Esophagus squamous epithelium (tissue), 5 donors: ENCODE measurements at regions of chr5 and their contacts with region 1.

Region 1: GRCh38 chr5:55232985-55233928 is at the start of gene CCNO:
- DNase-seq: no peak
- H3K4me3 ChIP-seq: peak within 1 kb of the TSS; percentile 49 to 77 (median 64)
- H3K27ac ChIP-seq: peak within 1 kb of the TSS; percentile 40 to 69 (median 54)
- H3K4me1 ChIP-seq: peaks cover 26 to 44% (median 35%) of the 10 kb centered on the region in 3 donors
- H3K27me3 ChIP-seq: peaks cover 7 to 99% (median 17%) of the 10 kb centered on the region in 4 donors
- CTCF ChIP-seq: peak in 1 of 6 experiments; percentile 15
- POLR2A ChIP-seq: peak in 1 of 4 donors; percentile 37
- total RNA-seq, gene CCNO: 0.95 to 1.6 (median 1.1) TPM

Region 2: GRCh38 chr5:55290991-55291390 is 57.7 kb after region 1 on chr5:
- intact Hi-C with region 1: loop called (anchors 10 kb)
- DNase-seq: no peak
- H3K4me3 ChIP-seq: no peak overlapping the region
- H3K27ac ChIP-seq: no peak overlapping the region
- H3K4me1 ChIP-seq: no peaks in the 10 kb centered on the region
- H3K27me3 ChIP-seq: no peaks in the 10 kb centered on the region
- CTCF ChIP-seq: no peak
- POLR2A ChIP-seq: no peak